ENCODE measurements at regions of chr11 and their contacts with region 1.

Region 1: GRCh38 chr11:64240394-64241174 is at the start of gene FKBP2:
- DNase-seq: peak; percentile 99
- total RNA-seq, gene FKBP2: 50.6 to 56.7 TPM

Region 2: DNA sequence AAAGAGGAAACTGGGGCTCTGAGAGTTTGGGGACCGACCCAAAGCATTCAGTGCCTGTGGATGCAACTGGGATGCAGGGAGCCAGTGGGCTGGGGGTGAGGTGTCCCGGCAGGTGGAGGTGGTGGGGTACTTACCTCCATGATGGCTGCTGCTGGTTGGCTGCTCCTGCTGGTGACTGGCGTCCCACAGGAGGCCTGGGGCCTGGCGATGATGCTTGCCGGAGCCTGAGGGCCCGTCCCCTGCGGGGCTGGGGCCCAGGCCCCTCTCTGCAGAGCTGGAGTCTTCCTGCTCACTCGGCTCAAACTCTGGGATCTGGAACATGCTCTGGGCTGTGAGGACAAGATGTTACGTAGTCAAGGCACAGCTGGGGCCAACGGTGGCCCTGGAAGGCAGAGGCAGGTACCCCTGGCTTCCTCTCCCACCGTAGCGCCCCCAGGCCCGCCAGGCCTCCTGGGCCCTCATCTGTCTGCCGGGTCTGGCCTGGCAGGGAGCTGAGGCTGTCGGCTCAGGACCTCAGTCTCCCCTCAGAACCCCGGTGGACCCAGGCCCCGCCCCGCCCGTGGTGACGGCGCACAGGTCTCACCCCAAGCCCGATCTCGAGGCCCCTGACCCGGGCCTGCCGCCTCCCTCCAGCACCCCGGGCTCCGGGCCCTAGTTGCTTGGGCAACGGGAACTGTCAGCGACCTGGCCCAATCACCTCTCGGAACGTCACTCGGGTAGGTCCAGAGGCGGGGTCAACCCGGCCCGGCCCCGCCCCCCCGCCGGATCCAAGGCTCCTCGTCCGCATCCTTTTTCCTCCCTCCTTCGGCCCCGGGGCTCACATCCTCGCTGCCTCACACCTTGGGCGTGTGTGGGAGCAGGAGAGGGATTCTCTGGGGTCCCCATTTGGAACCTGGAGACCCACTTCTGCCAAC is 43.7 kb after region 1 on chr11 and contains the start of gene BAD:
- intact Hi-C with region 1: no loop called
- DNase-seq: peak; percentile 98
- total RNA-seq, gene BAD: 49.6 to 57.3 TPM

Region 3: DNA sequence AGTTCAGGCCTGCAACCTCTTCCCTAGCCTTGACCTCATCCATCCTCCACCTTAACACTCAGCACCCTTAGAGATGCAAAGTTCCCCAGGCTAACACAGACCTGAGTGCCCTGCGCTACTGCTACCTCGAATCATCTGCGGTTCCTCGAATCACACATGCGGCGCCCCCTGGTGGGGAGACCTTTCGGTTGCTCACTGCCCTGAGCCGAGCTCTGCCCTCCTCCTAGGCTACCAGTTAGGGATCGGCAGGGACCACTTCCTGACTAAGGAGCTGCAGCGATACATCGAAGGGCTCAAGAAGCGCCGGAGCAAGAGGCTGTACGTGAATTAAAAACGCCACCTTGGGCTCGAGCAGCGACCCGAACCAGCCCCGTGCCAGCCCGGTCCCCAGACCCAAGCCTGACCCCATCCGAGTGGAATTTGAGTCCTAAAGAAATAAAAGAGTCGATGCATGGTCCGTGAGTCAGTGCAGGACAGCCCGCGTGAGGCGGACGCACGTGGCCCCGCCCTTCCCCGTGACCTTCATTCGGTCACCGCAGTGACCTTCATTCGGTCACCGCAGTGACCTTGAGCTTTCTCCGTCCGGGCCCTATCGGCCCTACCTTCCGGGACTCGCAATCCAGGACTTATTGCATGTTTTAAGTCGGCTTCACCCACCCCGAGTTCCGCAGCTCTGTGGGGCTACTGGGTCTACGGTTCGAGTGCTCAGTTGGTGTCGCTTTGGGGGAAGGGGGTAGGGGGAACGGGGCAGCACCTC is 63.9 kb after region 1 on chr11:
- intact Hi-C with region 1: loop called in 1 of 2 experiments (anchors 10 kb)
- DNase-seq: peak; percentile 98

Measured in posterior vena cava (tissue), 2 donors.